ENCODE measurements at regions of chr11 and their contacts with region 1.

Region 1: DNA sequence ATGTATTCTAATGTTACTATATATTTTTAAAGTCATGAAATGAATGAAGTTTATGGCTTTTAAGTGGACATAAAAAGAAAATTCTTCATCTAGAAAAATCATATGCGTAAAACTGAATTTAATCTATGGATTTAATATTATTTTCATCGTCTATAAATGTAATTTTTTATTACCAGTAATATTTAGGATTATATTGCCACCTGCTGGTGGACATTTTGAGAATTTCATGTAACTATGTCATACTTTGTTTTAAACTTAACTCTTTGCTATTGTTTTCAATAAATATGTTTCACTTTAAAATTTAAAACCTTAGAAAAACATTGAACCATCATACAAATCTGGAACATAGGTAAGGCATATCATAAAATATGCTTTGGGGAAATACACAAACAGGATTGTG is 66.5 kb upstream of the CEP126 start:
- DNase-seq: peak; percentile 77
- ATAC-seq: no peak
- H3K4me3 ChIP-seq: no peak overlapping the region
- H3K27ac ChIP-seq: no peak overlapping the region
- H3K4me1 ChIP-seq: peaks cover 4% of the 10 kb centered on the region; the same call in 1 of the 2 replicates
- H3K27me3 ChIP-seq: no peaks in the 10 kb centered on the region
- CTCF ChIP-seq: peak; percentile 84

Region 2: DNA sequence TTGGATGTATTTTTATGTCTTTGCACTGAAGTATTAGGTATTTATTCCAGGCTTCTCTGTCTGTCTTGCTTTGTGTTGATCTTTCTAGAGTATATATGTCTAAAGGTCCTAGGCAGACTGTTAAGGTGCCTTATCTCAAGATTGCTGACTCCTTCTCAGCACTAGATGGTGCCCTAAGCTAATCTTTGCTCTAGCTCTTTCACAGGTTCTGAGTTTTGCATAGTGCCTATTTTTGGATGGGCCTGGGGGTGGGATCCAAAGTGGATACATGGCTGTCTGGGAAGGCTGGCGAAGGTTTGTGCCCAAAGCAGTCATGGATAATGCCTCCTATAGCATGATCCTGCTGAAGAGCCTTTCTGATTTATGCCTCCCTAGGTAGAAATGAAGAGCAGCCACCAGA is 419.3 kb before region 1 on chr11:
- CTCF ChIA-PET with region 1: interaction called, 3 read pairs
- POLR2A ChIA-PET with region 1: no interaction called
- intact Hi-C with region 1: loop called (anchors 1 kb)
- DNase-seq: peak; percentile 70
- ATAC-seq: peak; percentile 85
- H3K4me3 ChIP-seq: no peak overlapping the region
- H3K27ac ChIP-seq: no peak overlapping the region
- H3K4me1 ChIP-seq: peaks cover 7% of the 10 kb centered on the region
- H3K27me3 ChIP-seq: no peaks in the 10 kb centered on the region
- CTCF ChIP-seq: peak; percentile 82

Region 3: DNA sequence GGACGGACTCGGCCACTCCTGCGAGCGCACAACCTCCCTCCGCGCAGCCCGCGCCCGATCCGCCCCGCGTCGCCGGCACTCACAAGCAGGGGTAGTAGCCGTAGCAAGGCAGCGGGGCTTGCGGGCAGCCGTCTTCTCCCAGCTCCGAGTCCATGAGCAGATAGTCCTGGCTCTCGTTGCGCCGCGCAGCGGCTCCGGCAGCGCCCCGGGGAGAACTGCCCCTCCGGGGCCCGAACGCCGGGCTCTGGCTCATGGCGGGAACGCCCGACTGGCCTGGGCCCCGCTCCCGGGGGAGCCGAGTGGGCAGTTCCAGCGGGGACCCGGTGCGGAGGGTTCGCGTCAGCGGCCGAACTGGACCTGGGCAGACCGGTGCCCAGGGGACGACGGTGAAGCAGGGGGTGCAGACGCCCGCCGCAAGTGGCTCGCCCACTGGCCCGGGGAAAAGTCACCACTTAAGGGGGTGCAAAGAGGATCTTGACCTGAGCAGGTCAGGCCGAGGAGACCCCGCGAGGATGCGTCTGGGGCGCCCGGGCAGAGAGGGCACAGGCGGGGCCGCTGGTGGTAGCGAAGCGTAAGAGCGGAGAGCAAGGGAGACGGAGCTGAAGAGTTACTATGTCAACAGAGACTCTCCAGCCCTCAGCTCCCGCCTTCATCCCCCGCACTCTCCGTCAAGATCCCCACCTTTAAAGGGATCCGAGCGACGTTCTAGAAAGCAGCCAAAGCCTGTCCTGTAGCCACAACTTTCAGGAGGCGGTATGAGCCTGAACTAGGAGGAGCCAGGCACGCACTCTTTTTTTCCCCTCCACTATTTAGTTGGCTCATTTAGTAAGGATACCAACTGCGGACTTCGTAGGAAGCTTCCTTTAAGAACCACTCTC is 264.8 kb before region 1 on chr11 and contains the start of gene TRPC6:
- CTCF ChIA-PET with region 1: no interaction called
- POLR2A ChIA-PET with region 1: no interaction called
- intact Hi-C with region 1: loop called (anchors 10 kb)
- DNase-seq: no peak
- ATAC-seq: no peak
- H3K4me3 ChIP-seq: no peak within 1 kb of the TSS
- H3K27ac ChIP-seq: no peak within 1 kb of the TSS
- H3K4me1 ChIP-seq: no peaks in the 10 kb centered on the region
- H3K27me3 ChIP-seq: peaks cover 27% of the 10 kb centered on the region; the same call in 1 of the 2 replicates
- CTCF ChIP-seq: no peak
- total RNA-seq, gene TRPC6: not detected in 2 replicates

Region 4: GRCh38 chr11:101759771-101760450 is 88.4 kb before region 1 on chr11:
- CTCF ChIA-PET with region 1: interaction called, 7 read pairs
- POLR2A ChIA-PET with region 1: no interaction called
- intact Hi-C with region 1: loop called (anchors 1 kb)
- DNase-seq: peak; percentile 87
- ATAC-seq: peak; percentile 77
- H3K4me3 ChIP-seq: no peak overlapping the region
- H3K27ac ChIP-seq: peak overlapping the region; percentile 33
- H3K4me1 ChIP-seq: peaks cover 32% of the 10 kb centered on the region
- H3K27me3 ChIP-seq: no peaks in the 10 kb centered on the region
- CTCF ChIP-seq: peak; percentile 83

Region 5: DNA sequence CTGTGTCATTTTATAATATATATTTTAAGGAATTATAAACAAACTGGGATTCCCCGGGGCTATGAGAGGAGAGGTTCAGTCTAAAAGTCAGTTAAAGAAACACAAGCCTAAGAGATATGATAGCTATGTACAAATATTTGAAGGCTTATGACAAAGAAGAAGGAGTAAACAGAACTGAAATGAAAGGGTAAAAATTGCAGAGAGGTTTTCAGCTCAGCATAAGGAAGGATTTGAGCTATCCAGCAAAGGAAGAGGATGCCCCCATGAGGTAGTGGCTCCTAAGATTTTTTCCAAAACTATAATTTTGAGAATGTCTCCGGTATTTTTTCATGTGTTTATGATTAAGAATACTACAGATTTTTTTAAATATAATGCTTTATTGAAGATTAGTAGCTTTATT is 126.0 kb after region 1 on chr11:
- CTCF ChIA-PET with region 1: interaction called, 4 read pairs
- POLR2A ChIA-PET with region 1: no interaction called
- intact Hi-C with region 1: loop called (anchors 2 kb)
- DNase-seq: peak; percentile 52
- ATAC-seq: peak; percentile 97
- H3K4me3 ChIP-seq: no peak overlapping the region
- H3K27ac ChIP-seq: no peak overlapping the region
- H3K4me1 ChIP-seq: 0 out of 2 replicates have a peak, but pooled peaks cover 5% of the 10 kb centered on the region
- H3K27me3 ChIP-seq: no peaks in the 10 kb centered on the region
- CTCF ChIP-seq: peak; percentile 61

Region 6: GRCh38 chr11:102036757-102037156 is 188.5 kb after region 1 on chr11:
- CTCF ChIA-PET with region 1: no interaction called
- POLR2A ChIA-PET with region 1: no interaction called
- intact Hi-C with region 1: no loop called
- DNase-seq: no peak
- ATAC-seq: no peak
- H3K4me3 ChIP-seq: no peak overlapping the region
- H3K27ac ChIP-seq: no peak overlapping the region
- H3K4me1 ChIP-seq: no peaks in the 10 kb centered on the region
- H3K27me3 ChIP-seq: no peaks in the 10 kb centered on the region
- CTCF ChIP-seq: no peak